ENCODE measurements at regions of chr2 and their contacts with region 1.

Region 1: DNA sequence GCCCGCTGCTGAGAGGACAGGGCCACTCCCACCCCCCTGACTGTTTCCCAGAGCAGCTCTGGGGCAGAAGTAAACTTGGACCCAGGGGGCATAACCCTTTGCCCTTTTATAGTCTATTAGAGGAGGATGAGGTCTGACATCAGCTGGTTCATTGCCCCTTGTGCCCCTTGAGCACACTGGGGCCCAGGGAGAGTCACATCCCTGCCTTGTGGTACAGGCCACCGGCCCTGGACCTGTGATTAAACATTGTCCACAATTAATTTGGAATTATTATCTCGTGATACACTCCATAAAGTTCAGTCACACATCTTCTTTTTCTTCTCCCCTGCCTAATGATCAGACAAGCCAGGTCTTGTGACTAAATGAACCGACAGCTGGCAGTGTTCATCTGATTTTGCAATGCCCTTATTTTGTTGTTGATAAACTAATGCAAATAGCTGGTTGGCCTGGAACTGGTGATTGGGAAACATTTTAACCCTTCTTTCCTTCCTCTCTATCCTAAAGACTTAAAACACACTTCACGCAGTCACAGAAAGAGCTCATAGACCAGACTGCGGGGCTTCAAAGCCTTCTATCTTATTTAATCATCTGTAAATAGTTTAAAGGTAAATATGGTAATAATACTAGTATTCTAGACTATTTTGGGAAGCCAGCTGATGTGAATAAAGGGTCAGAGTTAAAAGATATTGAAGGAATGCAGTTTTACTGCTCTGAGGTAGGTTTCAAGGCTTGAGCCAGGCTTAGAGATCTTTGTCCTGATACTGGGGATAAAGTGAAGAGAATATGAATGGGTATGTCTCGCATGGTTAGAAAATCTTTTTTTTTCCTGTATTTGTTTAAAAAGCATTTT is 13.3 kb downstream of the IL1R1 start:
- DNase-seq: peak; percentile 85 to 90
- H3K4me3 ChIP-seq: no peak overlapping the region
- H3K4me3 Mint-ChIP-seq: peak overlapping the region; percentile 56
- H3K27ac Mint-ChIP-seq: peak overlapping the region; percentile 84
- H3K4me1 ChIP-seq: peaks cover 51% of the 10 kb centered on the region
- H3K4me1 Mint-ChIP-seq: peaks cover 58% of the 10 kb centered on the region
- H3K27me3 ChIP-seq: no peaks in the 10 kb centered on the region
- H3K27me3 Mint-ChIP-seq: no peaks in the 10 kb centered on the region
- CTCF ChIP-seq: no peak

Region 2: GRCh38 chr2:102020596-102021181 is 135.2 kb before region 1 on chr2:
- CTCF ChIA-PET with region 1: interaction called, 9 read pairs
- POLR2A ChIA-PET with region 1: no interaction called
- intact Hi-C with region 1: loop called (anchors 2 kb)
- DNase-seq: peak; percentile 88 to 90
- H3K4me3 ChIP-seq: no peak overlapping the region
- H3K4me3 Mint-ChIP-seq: no peak overlapping the region
- H3K27ac Mint-ChIP-seq: peak overlapping the region; percentile 35
- H3K4me1 ChIP-seq: peaks cover 5% of the 10 kb centered on the region
- H3K4me1 Mint-ChIP-seq: peaks cover 5% of the 10 kb centered on the region
- H3K27me3 ChIP-seq: no peaks in the 10 kb centered on the region
- H3K27me3 Mint-ChIP-seq: no peaks in the 10 kb centered on the region
- CTCF ChIP-seq: peak; percentile 97 to 98

Region 3: DNA sequence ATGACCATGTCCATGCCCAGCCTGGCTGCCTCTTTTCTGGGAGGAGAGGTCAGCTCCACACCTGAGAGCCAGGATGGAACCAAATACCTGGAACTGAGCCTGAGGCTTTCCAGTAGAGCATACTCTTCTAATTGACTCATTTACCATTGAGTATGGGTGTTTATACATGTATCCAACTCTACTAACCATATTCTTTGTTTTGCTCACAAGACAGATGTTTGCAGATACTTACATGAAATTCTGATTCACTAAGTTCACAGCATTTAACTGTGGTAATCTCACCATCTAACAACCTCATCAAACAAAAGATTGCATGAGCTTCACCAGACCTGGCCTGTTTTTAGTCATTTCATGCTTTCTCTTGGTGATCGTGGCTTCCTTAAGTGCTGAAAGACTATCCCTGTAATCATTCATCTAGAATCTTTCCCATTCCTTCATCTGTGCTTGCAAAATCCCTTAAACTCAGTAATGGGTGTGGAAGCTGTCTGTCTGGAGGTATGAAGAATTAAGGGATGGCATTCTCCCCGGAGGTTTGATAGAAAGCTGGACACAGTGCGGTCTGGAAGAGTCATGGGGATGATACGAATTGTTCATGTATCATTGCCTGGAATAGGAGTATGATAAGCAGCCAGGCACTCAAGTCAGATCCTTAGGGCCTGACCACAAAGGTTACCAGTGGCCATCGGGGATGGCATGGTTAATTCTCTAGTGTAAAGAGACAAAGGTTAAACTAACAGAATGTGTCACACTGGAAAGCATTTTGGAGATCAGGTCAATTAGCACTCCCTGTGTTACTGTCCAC is 55.4 kb before region 1 on chr2:
- CTCF ChIA-PET with region 1: no interaction called
- POLR2A ChIA-PET with region 1: no interaction called
- intact Hi-C with region 1: loop called (anchors 1 kb)
- DNase-seq: peak; percentile 52 to 61
- H3K4me3 ChIP-seq: no peak overlapping the region
- H3K4me3 Mint-ChIP-seq: no peak overlapping the region
- H3K27ac Mint-ChIP-seq: peak overlapping the region; percentile 66
- H3K4me1 ChIP-seq: peaks cover 36% of the 10 kb centered on the region
- H3K4me1 Mint-ChIP-seq: peaks cover 39% of the 10 kb centered on the region
- H3K27me3 ChIP-seq: no peaks in the 10 kb centered on the region
- H3K27me3 Mint-ChIP-seq: no peaks in the 10 kb centered on the region
- CTCF ChIP-seq: no peak

Region 4: DNA sequence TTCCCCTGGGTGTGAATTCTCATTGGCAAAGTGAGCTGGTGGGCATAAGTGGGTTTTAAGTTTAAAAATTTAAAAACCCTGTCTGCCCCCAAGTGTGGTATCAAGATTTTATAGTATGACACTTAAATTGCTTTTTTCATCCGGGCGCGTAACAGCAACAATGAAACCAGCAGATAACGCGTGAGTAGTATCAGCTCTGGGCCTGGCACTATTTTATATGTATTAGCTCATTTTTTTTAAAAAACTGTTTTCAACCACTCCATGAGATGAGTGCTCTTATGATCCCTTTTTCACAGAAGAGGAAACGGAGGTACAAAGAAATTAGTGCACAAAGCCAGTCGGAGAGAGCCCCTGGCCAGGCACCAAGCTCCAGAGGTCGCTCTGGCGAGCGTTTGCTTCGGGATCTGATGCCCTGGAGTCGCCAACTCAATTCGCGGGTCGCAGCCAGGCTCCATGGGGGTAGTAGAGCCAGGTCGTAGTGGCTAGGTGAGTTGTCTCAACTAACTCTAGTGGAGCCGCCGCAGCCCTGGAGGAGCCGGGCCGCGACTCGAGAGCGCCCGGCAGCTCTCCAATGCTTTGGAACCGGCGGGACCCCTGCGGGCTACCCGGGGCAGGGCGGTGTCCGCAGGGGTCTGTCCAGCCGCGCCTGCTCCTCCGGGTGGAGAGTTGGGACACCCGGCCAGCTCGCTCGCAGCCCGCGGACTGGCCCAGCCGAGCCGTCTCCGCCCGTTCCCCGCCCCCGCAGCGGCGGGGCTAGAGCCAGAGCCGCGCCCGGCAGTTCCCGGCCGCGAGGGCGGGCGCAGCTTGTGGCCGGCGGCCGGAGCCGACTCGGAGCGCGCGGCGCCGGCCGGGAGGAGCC is 13.7 kb before region 1 on chr2 and contains the start of gene IL1R1:
- CTCF ChIA-PET with region 1: interaction called, 8 read pairs
- POLR2A ChIA-PET with region 1: interaction called, 7 read pairs
- intact Hi-C with region 1: loop called (anchors 1 kb)
- DNase-seq: peak; percentile 72 to 89
- H3K4me3 ChIP-seq: peak within 1 kb of the TSS; percentile 48
- H3K4me3 Mint-ChIP-seq: peak within 1 kb of the TSS; percentile 90
- H3K27ac Mint-ChIP-seq: peak within 1 kb of the TSS; percentile 95
- H3K4me1 ChIP-seq: no peaks in the 10 kb centered on the region
- H3K4me1 Mint-ChIP-seq: peaks cover 6% of the 10 kb centered on the region
- H3K27me3 ChIP-seq: no peaks in the 10 kb centered on the region
- H3K27me3 Mint-ChIP-seq: no peaks in the 10 kb centered on the region
- CTCF ChIP-seq: peak in 1 of 2 experiments; percentile 24
- total RNA-seq, gene IL1R1: 23.5 and 25.0 TPM in 2 replicates

Region 5: GRCh38 chr2:102240640-102241370 is 84.9 kb after region 1 on chr2:
- CTCF ChIA-PET with region 1: interaction called, 11 read pairs
- POLR2A ChIA-PET with region 1: no interaction called
- intact Hi-C with region 1: loop called (anchors 1 kb)
- DNase-seq: peak; percentile 87 to 92
- H3K4me3 ChIP-seq: no peak overlapping the region
- H3K4me3 Mint-ChIP-seq: no peak overlapping the region
- H3K27ac Mint-ChIP-seq: no peak overlapping the region
- H3K4me1 ChIP-seq: peaks cover 5% of the 10 kb centered on the region; the same call in 1 of the 2 replicates
- H3K4me1 Mint-ChIP-seq: peaks cover 6% of the 10 kb centered on the region
- H3K27me3 ChIP-seq: no peaks in the 10 kb centered on the region
- H3K27me3 Mint-ChIP-seq: no peaks in the 10 kb centered on the region
- CTCF ChIP-seq: peak; percentile 93 to 98